MCF 10A (cell line): ENCODE measurements at regions of chr15 and their contacts with region 1.

Region 1: GRCh38 chr15:70636540-70637165 is 126.7 kb downstream of the UACA start:
- DNase-seq: peak; percentile 21
- H3K4me3 Mint-ChIP-seq: no peak overlapping the region
- H3K27ac Mint-ChIP-seq: no peak overlapping the region
- H3K4me1 Mint-ChIP-seq: no peaks in the 10 kb centered on the region
- H3K27me3 Mint-ChIP-seq: peaks cover 12% of the 10 kb centered on the region
- CTCF ChIP-seq: no peak

Region 2: GRCh38 chr15:70569091-70569621 is 67.5 kb before region 1 on chr15:
- CTCF ChIA-PET with region 1: no interaction called
- POLR2A ChIA-PET with region 1: no interaction called
- intact Hi-C with region 1: loop called (anchors 5 kb)
- DNase-seq: peak; percentile 91
- H3K4me3 Mint-ChIP-seq: no peak overlapping the region
- H3K27ac Mint-ChIP-seq: no peak overlapping the region
- H3K4me1 Mint-ChIP-seq: peaks cover 16% of the 10 kb centered on the region
- H3K27me3 Mint-ChIP-seq: no peaks in the 10 kb centered on the region
- CTCF ChIP-seq: peak; percentile 52